ENCODE measurements at regions of chr7 and their contacts with region 1.

Region 1: DNA sequence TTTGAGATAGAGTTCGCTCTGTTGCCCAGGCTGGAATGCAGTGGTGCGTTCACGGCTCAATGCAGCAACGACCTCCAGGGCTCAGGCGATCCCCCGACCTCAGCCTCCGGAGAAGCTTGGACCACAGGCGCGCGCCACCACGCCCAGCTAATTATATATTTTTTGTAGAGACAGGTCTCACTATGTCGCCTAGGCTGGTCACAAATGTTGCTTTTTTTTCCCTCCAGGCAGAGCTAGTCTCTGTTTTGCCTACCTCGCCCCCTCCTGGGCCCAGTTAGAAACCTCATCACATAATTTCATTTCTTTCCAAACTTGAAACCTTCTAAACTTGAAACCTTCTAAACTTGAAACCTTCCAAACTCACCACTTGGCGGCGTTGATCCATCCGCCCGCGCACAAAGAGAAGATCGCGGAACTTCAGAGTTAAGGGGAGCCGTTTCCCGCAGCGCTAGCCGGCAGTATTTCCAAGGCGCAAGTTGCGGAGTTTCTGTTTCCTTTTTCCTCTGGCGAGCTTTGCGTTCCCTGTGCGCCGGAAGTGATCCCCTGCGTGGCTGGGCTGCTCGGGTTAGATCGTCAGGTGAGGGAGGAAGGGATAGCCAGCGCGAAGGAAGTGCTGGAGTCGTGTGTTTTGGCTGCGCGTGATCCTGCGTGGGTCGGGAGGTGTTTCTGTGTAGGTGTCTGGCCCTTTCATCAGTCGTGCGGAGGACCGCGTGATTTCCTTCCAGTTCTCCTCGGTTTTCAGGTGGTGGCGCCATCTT is at the start of gene SSBP1:
- DNase-seq: peak; percentile 95
- H3K4me3 Mint-ChIP-seq: peak within 1 kb of the TSS; percentile 90
- H3K27ac Mint-ChIP-seq: peak within 1 kb of the TSS; percentile 96
- H3K4me1 Mint-ChIP-seq: peaks cover 36% of the 10 kb centered on the region
- H3K27me3 Mint-ChIP-seq: no peaks in the 10 kb centered on the region
- total RNA-seq, gene SSBP1: 202 to 230 TPM

Region 2: GRCh38 chr7:140696680-140697446 is 1041.2 kb before region 1 on chr7 and contains the start of gene NDUFB2:
- CTCF ChIA-PET with region 1: no interaction called
- intact Hi-C with region 1: loop called (anchors 2 kb)
- DNase-seq: peak; percentile 75
- H3K4me3 Mint-ChIP-seq: peak within 1 kb of the TSS; percentile 98
- H3K27ac Mint-ChIP-seq: peak within 1 kb of the TSS; percentile 99
- H3K4me1 Mint-ChIP-seq: peaks cover 34% of the 10 kb centered on the region
- H3K27me3 Mint-ChIP-seq: no peaks in the 10 kb centered on the region
- total RNA-seq, gene NDUFB2: 167 to 179 TPM

Region 3: DNA sequence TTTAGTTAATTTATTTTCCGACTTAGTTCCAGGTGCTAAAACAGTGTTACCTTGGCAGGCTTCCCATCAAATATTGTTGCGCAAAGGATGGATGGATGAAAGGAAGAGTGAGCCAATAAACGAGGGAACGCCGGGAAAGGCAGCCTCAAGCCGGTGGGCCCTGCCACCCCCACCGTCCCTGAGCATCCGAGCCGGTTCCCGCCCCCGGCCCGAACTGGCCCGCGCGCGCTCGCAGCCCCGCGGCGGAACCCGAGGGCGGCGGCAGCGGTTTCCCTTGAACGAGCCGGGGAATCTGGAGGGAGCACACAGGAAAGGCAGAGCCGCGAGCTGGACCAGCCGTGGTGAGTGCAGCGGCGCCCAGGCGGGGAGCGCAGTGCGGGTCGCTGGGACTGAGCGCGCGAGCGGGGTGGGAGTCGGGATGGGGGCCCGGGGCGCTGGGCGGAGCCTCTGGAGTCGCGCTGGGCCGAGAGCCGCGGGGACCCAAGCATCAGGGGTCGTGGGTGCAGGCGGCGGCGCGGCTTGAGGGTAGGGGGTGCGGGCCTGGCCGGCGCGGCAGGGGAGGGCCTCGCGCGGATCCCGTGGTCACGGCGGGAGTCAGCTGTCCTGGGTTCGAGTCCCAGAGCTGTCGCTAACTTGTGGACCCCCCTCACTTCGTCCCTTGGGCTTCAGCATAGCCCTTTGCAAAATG is 186.8 kb before region 1 on chr7 and contains the start of gene AGK:
- CTCF ChIA-PET with region 1: interaction called, 5 read pairs
- intact Hi-C with region 1: loop called (anchors 1 kb)
- DNase-seq: peak; percentile 83
- H3K4me3 Mint-ChIP-seq: peak within 1 kb of the TSS; percentile 86
- H3K27ac Mint-ChIP-seq: peak within 1 kb of the TSS; percentile 85
- H3K4me1 Mint-ChIP-seq: peaks cover 36% of the 10 kb centered on the region
- H3K27me3 Mint-ChIP-seq: no peaks in the 10 kb centered on the region
- total RNA-seq, gene AGK: 35.8 to 37.9 TPM

Region 4: DNA sequence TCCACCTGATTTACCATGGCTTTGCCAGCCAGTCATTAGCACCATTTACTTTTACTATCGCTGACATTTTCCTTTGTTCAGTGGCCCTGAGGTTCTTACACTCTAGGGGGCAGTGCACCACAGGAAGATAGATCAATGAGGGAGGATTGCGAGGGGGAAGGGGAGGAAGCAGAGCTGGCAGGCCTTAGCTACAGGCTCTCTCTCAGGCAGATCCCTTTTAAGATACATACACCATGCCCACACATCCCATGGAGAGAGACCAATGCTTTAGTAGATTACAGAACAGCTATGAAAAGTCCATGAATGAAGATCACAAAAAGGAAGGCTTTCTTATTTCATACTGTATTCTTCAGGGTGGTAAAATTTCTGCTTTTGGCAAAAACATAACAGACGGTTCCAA is 83.5 kb before region 1 on chr7:
- CTCF ChIA-PET with region 1: interaction called, 52 read pairs
- intact Hi-C with region 1: loop called (anchors 1 kb)
- DNase-seq: peak; percentile 84
- H3K4me3 Mint-ChIP-seq: no peak overlapping the region
- H3K27ac Mint-ChIP-seq: peak overlapping the region; percentile 68
- H3K4me1 Mint-ChIP-seq: peaks cover 6% of the 10 kb centered on the region
- H3K27me3 Mint-ChIP-seq: no peaks in the 10 kb centered on the region

Region 5: DNA sequence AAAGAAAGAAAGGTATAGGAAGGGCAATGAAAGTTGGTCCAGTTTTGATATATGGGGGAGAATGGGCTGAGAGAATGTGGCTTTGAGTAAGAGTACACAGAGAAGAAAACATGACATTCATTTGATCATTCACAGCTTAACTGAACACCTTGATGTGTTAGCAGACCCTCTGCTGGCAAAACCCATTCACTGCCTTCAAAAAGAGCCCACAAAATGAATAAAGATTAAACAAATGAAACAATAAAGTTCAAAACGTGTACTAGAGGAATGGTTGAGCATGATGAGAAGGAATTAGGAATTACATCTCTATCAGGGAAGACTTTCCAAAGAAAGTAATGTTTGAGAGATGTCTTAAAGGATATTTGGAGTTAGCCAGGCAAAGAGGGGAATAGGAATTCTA is 27.7 kb before region 1 on chr7:
- CTCF ChIA-PET with region 1: interaction called, 10 read pairs
- intact Hi-C with region 1: no loop called
- DNase-seq: no peak
- H3K4me3 Mint-ChIP-seq: no peak overlapping the region
- H3K27ac Mint-ChIP-seq: no peak overlapping the region
- H3K4me1 Mint-ChIP-seq: peaks cover 4% of the 10 kb centered on the region
- H3K27me3 Mint-ChIP-seq: no peaks in the 10 kb centered on the region

Region 6: DNA sequence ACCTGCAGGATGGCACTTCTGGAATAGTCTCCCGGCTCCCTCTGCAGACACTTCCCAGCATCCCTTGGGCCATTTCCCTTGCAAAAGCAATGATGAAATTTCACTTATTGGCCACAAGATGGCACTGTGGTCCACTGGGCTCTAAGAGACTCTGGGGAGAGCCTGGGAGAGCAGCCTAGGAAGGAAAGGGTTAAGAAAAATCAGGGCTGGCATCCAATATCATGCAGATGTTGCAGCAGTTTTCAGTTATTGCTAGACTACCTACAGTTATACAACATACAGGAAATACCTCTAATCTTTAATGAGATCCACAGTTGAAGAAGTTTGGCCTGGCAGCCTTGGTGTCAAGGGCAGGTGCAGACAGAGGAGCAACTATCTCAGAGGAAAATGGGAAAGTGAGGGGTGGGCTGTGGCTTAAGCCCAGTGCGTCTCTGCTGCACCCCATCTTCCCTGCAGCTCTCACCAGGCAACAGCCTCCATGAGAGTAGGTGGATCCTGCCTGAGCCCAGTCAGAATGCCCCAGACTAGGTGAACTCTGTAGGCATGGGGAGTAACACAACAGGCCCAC is 620.0 kb after region 1 on chr7:
- CTCF ChIA-PET with region 1: interaction called, 3 read pairs
- intact Hi-C with region 1: loop called (anchors 10 kb)
- DNase-seq: peak; percentile 59
- H3K4me3 Mint-ChIP-seq: peak overlapping the region; percentile 29
- H3K27ac Mint-ChIP-seq: no peak overlapping the region
- H3K4me1 Mint-ChIP-seq: peaks cover 38% of the 10 kb centered on the region
- H3K27me3 Mint-ChIP-seq: no peaks in the 10 kb centered on the region